ENCODE measurements at regions of chr11 and their contacts with region 1.

Region 1: DNA sequence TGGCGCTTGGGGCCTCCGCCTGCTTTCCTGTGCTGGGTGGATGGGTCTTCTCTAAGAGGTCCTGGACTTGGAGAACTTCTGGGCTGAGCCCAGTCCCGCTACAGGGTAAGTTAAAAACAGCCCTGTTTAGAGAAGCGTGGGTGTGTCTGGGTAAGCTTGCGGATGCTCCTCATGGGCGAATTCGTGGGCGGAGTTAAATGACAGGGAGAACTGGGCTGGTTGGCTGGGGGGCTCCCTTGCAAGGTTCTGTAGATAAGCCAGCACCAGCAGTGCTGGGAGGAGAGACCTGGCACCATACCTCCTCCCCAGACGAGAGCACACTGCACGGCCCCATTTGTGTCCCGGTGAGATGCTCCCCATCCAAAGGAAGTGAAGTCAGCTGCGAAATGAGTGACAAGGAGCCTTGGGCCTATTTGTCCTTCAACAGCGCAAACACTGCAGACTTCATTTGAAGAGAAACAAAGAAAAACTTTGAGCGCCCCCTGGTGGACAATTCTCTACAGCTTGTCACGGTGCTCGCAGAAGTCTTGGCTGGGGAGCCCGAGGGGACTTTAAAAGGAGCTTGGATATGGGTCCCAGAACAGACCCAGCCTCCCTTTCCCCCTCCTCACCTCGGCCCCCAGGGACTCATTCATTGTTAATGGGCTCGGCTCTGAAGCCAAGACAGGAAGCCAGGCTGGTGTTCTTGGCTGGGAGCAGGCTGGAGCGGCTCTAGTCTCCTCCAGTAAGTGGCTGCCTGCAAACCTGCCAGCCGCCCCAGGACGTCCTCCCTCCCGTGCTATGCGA is 39.5 kb downstream of the TP53I11 start:
- DNase-seq: peak in 4 of 5 donors; percentile 90 to 95 (median 94)
- H3K4me3 ChIP-seq: no peak overlapping the region
- H3K27ac ChIP-seq: no peak overlapping the region
- H3K4me1 ChIP-seq: peaks cover 0 to 5% (median 0%) of the 10 kb centered on the region in 3 donors
- H3K27me3 ChIP-seq: no peaks in the 10 kb centered on the region
- CTCF ChIP-seq: peak; percentile 80

Region 2: DNA sequence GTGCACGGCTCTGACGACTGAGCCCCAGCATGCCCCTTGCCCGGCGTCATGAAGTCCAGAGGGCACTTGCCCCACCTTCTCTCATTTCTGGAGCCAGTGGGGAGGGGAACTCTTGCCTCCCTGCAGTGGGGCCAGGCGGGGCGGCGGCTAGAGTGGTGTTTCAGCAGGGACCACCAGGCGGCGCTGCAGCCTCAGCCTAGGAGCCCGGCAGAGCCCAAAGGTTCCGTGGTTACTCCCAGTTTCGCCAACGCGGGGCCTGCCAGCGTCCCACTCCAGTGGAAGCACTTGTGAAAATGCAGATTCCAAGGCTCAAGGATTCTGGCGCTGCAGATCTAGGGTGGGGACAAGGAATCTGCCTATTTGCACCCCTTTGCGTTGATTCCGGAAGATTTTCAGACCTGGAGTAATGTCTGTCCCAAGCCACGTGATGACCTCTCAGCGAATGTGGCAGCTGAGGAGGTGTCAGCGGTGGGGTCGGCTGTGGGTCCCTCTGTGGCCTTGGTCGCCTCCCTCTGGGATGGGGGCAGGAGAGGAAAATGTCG is 290.0 kb before region 1 on chr11:
- intact Hi-C with region 1: loop called (anchors 5 kb)
- DNase-seq: peak; percentile 84 to 89 (median 88)
- H3K4me3 ChIP-seq: peak overlapping the region; percentile 21 to 55 (median 33)
- H3K27ac ChIP-seq: no peak overlapping the region
- H3K4me1 ChIP-seq: peaks cover 0 to 9% (median 0%) of the 10 kb centered on the region in 3 donors
- H3K27me3 ChIP-seq: no peaks in the 10 kb centered on the region
- CTCF ChIP-seq: peak; percentile 92

Region 3: GRCh38 chr11:45225277-45225676 is 314.1 kb after region 1 on chr11:
- intact Hi-C with region 1: no loop called
- DNase-seq: no peak
- H3K4me3 ChIP-seq: no peak overlapping the region
- H3K27ac ChIP-seq: no peak overlapping the region
- H3K4me1 ChIP-seq: no peaks in the 10 kb centered on the region
- H3K27me3 ChIP-seq: no peaks in the 10 kb centered on the region
- CTCF ChIP-seq: no peak

Measured in kidney (tissue), 22 donors.